WTC11 (cell line): ENCODE measurements at regions of chr10 and their contacts with region 1.

Region 1: GRCh38 chr10:102669206-102670064 is 25.2 kb downstream of the TRIM8 start:
- DNase-seq: peak; percentile 56
- ATAC-seq: peak; percentile 43
- H3K4me3 Mint-ChIP-seq: no peak overlapping the region
- H3K27ac Mint-ChIP-seq: no peak overlapping the region
- H3K4me1 Mint-ChIP-seq: peaks cover 47% of the 10 kb centered on the region
- H3K27me3 Mint-ChIP-seq: no peaks in the 10 kb centered on the region
- CTCF ChIP-seq: peak; percentile 55

Region 2: DNA sequence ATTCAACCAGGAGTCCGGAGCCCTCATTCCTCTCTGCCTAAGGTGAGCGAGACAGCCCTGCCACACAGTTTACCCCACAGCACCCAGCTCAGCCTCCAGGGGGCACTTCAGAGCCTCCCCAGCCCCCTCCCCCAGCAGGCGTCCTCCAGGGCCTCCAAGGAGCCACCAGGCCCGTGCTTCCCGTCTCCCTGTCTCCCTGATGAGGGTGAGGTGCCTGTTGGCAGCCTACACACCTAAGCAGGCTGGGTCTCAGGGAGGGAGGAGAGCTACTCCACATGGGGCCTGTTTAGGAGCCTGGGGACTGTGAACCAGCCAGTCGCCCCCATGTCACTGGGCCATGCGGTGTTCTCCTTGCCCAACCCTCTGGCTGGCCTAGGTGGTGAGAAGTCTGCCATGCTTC is 54.1 kb before region 1 on chr10:
- CTCF ChIA-PET with region 1: interaction called, 23 read pairs
- POLR2A ChIA-PET with region 1: no interaction called
- DNase-seq: peak; percentile 77
- ATAC-seq: peak; percentile 86
- H3K4me3 Mint-ChIP-seq: no peak overlapping the region
- H3K27ac Mint-ChIP-seq: no peak overlapping the region
- H3K4me1 Mint-ChIP-seq: peaks cover 8% of the 10 kb centered on the region
- H3K27me3 Mint-ChIP-seq: no peaks in the 10 kb centered on the region
- CTCF ChIP-seq: peak; percentile 43

Region 3: GRCh38 chr10:102648889-102649796 is 20.3 kb before region 1 on chr10:
- CTCF ChIA-PET with region 1: interaction called, 26 read pairs
- POLR2A ChIA-PET with region 1: interaction called, 6 read pairs
- DNase-seq: no peak
- ATAC-seq: peak; percentile 2; the same call in 1 of the 2 replicates
- H3K4me3 Mint-ChIP-seq: peak overlapping the region; percentile 22
- H3K27ac Mint-ChIP-seq: peak overlapping the region; percentile 90
- H3K4me1 Mint-ChIP-seq: peaks cover 59% of the 10 kb centered on the region
- H3K27me3 Mint-ChIP-seq: no peaks in the 10 kb centered on the region
- CTCF ChIP-seq: no peak

Region 4: GRCh38 chr10:102713814-102714620 is 44.6 kb after region 1 on chr10 and contains the start of gene ARL3:
- CTCF ChIA-PET with region 1: interaction called, 101 read pairs
- POLR2A ChIA-PET with region 1: no interaction called
- DNase-seq: peak; percentile 98
- ATAC-seq: peak; percentile 93
- H3K4me3 Mint-ChIP-seq: peak within 1 kb of the TSS; percentile 90
- H3K27ac Mint-ChIP-seq: peak within 1 kb of the TSS; percentile 73
- H3K4me1 Mint-ChIP-seq: peaks cover 46% of the 10 kb centered on the region
- H3K27me3 Mint-ChIP-seq: no peaks in the 10 kb centered on the region
- CTCF ChIP-seq: 0 out of 2 replicates have a peak, but pooled peaks have one; percentile 25
- total RNA-seq, gene ARL3: 13.3 to 16.1 TPM (median 15.6 TPM) in 3 replicates